A673 (cell line): ENCODE measurements at regions of chr14 and their contacts with region 1.

Region 1: DNA sequence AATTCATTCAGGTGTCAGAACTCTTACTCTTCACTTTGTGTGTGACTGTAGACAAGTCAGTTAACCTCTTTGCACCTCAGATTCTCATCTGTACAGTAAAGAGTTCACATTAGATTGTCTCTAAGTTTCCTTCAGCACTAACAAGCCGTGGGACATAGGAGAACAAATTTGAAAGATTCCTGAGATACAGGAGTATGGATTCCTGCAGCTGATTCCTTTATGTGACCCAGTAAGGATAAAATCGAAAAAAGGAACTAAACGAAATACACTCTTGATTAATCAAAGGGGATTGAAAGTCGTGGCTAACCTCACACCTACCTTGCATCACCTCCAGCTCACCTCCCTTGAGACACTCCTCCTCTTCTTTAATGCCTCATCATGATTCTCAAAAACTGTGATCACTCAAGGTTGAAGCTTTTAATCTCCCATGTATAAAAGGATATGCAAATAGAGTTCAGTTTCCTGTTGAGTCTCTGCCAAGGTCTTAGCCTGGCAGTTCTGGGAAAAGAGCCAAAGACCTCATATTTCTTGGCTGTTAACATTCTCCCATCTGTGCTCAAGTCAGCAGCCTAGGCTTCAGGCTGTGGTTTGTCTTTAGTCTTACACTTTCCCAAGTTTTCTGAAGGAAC is 156.6 kb downstream of the DAD1 start:
- DNase-seq: peak; percentile 98
- H3K4me3 ChIP-seq: peak overlapping the region; percentile 8
- H3K27ac ChIP-seq: peak overlapping the region; percentile 97
- H3K4me1 ChIP-seq: peaks cover 84% of the 10 kb centered on the region
- H3K27me3 ChIP-seq: no peaks in the 10 kb centered on the region
- CTCF ChIP-seq: no peak

Region 2: DNA sequence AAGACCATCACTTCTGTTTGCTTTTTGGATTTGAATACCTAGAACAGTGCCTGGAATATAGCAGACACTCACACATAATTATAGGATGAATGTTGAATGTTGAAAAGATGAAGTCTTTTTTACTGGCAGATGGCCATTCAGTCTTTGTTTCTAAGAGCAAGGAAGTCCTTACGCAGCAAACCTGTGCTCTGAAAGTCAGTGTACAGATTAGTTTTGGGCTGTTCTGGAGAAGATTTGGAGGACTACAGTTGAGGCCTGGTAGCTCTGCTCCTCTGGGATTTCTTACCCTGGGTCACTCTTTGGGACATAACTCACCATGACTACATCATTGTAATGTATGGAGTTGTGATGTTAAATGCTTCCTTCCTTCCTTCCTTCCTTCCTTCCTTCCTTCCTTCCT is 775.5 kb before region 1 on chr14:
- CTCF ChIA-PET with region 1: no interaction called
- POLR2A ChIA-PET with region 1: no interaction called
- intact Hi-C with region 1: loop called (anchors 5 kb)
- DNase-seq: peak; percentile 98
- H3K4me3 ChIP-seq: no peak overlapping the region
- H3K27ac ChIP-seq: peak overlapping the region; percentile 100
- H3K4me1 ChIP-seq: peaks cover 84% of the 10 kb centered on the region
- H3K27me3 ChIP-seq: no peaks in the 10 kb centered on the region
- CTCF ChIP-seq: no peak

Region 3: DNA sequence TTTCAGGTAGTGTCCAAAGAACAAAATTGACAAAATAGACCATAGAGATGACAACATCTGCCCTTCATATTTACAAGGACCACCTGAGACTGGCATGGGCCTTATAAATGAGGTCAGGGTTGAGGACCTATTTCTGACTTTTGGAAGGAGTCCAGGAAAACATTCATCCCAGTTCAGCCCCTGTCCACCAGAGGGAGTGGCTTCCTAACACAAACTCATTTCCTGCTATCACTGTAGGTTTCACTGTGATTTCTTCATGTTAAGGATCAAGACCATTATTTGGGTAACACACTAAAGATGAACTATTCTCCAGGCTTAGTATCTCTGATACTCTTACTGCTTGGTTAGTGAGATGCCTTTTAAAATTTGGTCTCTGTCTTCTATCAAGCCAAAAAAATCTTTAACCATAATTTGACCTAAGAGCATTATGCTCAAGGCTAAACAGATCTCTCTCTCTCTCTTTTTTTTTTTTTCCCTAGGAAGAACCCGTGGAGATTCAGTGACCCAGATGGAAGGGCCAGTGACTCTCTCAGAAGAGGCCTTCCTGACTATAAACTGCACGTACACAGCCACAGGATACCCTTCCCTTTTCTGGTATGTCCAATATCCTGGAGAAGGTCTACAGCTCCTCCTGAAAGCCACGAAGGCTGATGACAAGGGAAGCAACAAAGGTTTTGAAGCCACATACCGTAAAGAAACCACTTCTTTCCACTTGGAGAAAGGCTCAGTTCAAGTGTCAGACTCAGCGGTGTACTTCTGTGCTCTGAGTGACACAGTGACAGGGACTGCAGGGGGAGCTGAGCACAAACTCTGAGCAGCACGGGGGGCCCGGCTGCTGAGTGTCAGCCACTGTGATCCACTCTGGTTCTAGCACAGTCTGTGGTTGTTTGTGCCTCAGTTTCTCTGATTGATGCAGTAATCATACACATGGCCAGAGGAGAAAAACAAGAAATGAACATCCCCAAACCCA is 491.3 kb before region 1 on chr14:
- CTCF ChIA-PET with region 1: no interaction called
- POLR2A ChIA-PET with region 1: no interaction called
- intact Hi-C with region 1: no loop called
- DNase-seq: peak; percentile 53
- H3K4me3 ChIP-seq: no peak overlapping the region
- H3K27ac ChIP-seq: no peak overlapping the region
- H3K4me1 ChIP-seq: no peaks in the 10 kb centered on the region
- H3K27me3 ChIP-seq: no peaks in the 10 kb centered on the region
- CTCF ChIP-seq: peak; percentile 60